Activated naive CD4-positive, alpha-beta T cell treated with anti-CD3 and anti-CD28 coated beads for 36 hours (primary cell): ENCODE measurements at regions of chr19 and their contacts with region 1.

Region 1: DNA sequence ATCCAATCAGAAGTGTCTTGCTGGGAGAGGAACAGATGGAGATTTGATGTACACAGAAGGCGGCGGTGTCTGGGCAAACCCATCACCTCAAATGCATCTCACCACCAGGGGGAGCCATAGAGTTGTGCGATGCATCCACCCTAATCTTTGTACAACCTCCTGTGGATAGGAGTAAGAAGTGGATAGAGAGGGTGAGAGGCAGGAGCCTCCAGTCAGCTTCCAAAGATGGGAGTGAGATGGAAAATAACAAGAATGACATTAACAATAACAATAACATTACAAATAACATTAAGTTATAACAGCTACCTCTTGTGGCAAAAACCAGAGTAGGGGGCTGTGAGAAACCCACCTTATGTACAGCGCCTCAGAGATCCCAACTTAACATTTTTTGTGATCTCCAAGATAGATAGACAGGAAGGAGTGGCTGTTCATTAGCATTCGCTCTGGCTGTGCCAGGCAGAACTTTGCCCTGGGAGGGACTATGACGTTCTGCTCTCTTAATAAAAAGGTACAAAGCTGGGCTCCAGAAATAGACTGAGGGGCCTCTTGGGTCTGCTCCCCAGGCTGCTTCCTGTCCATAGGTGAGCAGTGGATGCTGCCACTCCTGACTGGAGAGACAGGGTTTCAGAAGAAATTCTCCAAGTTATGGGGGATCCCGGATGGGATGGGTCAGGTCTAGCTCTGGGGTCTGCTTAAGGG is 5.2 kb upstream of the CEACAM18 start:
- DNase-seq: peak; percentile 93
- H3K4me3 Mint-ChIP-seq: no peak overlapping the region
- H3K27ac Mint-ChIP-seq: no peak overlapping the region
- H3K4me1 Mint-ChIP-seq: peaks cover 4% of the 10 kb centered on the region
- H3K27me3 Mint-ChIP-seq: peaks cover 8% of the 10 kb centered on the region

Region 2: DNA sequence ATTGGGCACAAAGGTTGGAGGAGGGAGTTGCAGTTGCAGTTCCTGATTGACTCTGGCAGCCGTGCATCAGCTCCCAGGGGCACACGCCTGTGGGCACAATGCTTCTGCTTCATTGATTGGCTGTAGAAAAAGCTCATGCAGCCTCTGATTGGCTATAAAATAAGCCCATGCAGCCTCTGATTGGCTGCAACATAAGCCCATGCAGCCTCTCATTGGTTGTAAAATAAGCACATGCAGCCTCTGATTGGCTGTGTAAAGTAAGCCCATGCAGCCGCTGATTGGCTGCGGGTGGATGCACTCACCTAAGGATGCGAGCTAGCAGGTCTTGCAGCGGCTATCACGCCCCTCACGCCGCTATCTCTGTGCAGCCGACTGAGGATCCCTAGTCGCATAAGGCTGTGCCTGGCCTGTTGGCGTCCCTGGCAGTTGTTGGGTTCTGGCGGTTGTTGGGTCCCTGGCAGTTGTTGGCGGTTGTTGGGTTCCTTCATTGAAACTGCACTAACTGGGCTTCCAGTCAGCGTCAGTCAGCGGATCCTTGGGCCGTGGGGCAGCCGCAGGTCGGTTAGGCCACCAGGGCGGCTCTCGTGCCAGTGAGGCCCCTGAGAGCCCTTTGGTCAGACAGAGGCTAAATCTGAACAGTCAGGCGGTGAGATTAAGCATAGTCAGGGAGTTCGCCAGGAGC is 222.2 kb before region 1 on chr19 and contains the start of gene SIGLECL1:
- CTCF ChIA-PET with region 1: no interaction called
- intact Hi-C with region 1: no loop called
- DNase-seq: no peak
- H3K4me3 Mint-ChIP-seq: no peak within 1 kb of the TSS
- H3K27ac Mint-ChIP-seq: no peak within 1 kb of the TSS
- H3K4me1 Mint-ChIP-seq: peaks cover 2% of the 10 kb centered on the region
- H3K27me3 Mint-ChIP-seq: peaks cover 3% of the 10 kb centered on the region
- total RNA-seq, gene SIGLECL1: not detected

Region 3: DNA sequence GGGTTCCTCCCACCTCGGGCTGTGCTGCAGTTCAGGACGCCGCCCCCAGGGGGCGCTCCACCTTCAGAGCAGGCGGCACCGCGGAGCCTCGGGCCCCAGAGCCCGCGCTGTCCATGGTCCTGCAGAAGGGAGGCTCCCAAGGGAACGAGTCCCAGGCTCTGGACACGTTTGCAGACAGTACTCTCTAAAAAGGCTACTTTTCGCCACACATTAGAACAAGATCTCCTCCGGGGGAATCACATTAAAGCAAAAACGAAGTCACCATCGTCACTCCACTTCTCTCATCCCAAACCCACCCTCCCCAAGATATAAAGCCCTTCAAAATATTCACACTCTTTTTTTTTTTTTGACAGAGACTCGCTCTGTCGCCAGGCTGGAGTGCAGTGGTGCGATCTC is 51.1 kb before region 1 on chr19:
- CTCF ChIA-PET with region 1: interaction called, 8 read pairs
- intact Hi-C with region 1: loop called (anchors 5 kb)
- DNase-seq: peak; percentile 91
- H3K4me3 Mint-ChIP-seq: no peak overlapping the region
- H3K27ac Mint-ChIP-seq: no peak overlapping the region
- H3K4me1 Mint-ChIP-seq: peaks cover 8% of the 10 kb centered on the region
- H3K27me3 Mint-ChIP-seq: peaks cover 24% of the 10 kb centered on the region

Region 4: DNA sequence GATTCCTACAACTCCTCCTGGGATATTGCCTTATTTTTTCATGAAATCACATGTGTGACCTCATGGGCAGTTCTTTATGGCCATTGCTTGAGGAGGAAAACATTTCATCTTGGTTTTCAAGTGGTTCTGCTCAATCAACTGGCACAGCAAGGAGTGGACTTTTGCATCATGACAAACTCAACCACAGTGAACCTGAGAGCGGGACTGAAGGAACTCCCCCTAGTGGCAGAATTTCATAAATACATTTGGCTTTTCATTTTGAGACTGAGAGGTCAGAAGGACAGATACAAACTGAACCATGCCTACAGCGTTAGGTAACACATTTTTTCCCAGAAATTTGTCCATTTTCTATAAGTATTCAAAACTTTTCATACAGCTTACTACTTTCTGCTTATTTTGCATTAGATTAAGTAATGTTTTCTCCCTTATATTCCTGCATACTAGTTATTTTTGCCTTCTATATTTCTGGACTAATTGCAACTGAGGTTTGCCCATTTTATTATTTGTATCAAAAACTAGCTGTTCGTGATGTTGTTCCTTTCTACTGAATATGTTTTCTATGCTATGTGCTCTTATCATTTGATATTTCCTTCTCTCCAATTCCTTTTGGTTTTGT is 41.8 kb after region 1 on chr19:
- CTCF ChIA-PET with region 1: interaction called, 57 read pairs
- intact Hi-C with region 1: loop called (anchors 1 kb)
- DNase-seq: peak; percentile 31
- H3K4me3 Mint-ChIP-seq: no peak overlapping the region
- H3K27ac Mint-ChIP-seq: no peak overlapping the region
- H3K4me1 Mint-ChIP-seq: no peaks in the 10 kb centered on the region
- H3K27me3 Mint-ChIP-seq: peaks cover 15% of the 10 kb centered on the region

Region 5: GRCh38 chr19:51654783-51655182 is 181.6 kb after region 1 on chr19:
- CTCF ChIA-PET with region 1: interaction called, 43 read pairs
- intact Hi-C with region 1: loop called (anchors 1 kb)
- DNase-seq: no peak
- H3K4me3 Mint-ChIP-seq: no peak overlapping the region
- H3K27ac Mint-ChIP-seq: no peak overlapping the region
- H3K4me1 Mint-ChIP-seq: peaks cover 5% of the 10 kb centered on the region
- H3K27me3 Mint-ChIP-seq: peaks cover 9% of the 10 kb centered on the region

Region 6: DNA sequence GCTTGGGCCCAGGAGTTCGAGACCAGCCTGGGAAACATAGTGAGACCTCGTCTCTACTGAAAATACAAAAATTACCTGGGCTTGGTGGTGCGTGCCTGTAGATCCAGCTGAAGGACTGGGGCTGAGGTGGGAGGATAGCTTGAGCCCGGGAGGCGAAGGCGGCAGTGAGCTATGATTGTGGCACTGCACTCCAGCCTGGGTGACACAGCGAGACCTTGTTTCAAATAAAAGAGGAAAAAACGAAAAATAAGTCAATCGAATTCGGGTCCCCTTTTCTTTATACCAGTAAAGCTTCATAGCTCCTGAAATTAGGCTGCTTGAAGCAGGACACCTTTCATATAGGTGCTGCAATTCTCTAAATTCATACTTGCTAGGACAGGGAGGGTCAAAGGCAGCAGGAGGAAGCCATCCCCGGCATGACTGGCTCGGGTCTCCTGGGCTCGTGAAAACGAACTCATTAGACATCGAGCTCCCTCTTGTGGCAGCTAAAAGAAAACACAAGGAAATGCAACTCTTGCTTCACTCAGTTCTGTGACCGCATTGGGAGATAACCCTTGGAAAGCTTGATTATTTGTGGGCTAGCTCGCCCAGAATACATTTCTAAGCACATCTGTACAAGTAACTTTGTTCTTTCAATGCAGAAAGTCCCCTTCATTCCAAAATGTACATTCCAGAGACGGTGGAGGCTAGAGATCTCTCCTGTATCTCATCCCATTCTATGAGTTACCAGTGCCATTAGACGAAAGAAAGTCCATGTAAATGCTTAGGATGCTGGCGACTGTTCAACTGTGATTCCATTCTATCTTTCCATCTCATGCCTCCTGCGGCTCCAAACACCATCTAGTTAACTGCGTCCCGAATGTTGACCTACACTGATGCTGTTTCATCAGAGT is 304.7 kb after region 1 on chr19:
- CTCF ChIA-PET with region 1: interaction called, 4 read pairs
- intact Hi-C with region 1: loop called (anchors 2 kb)
- DNase-seq: peak; percentile 49
- H3K4me3 Mint-ChIP-seq: no peak overlapping the region
- H3K27ac Mint-ChIP-seq: no peak overlapping the region
- H3K4me1 Mint-ChIP-seq: no peaks in the 10 kb centered on the region
- H3K27me3 Mint-ChIP-seq: peaks cover 62% of the 10 kb centered on the region